Esophagus muscularis mucosa (tissue), 4 donors: ENCODE measurements at regions of chr9 and their contacts with region 1.

Region 1: GRCh38 chr9:19408693-19409400 is at the start of gene ACER2:
- DNase-seq: peak; percentile 97
- H3K4me3 ChIP-seq: peak within 1 kb of the TSS; percentile 70 to 91 (median 84)
- H3K27ac ChIP-seq: peak within 1 kb of the TSS; percentile 78 to 90 (median 84)
- H3K4me1 ChIP-seq: peaks cover 15 to 23% (median 17%) of the 10 kb centered on the region in 4 donors
- H3K27me3 ChIP-seq: no peaks in the 10 kb centered on the region
- CTCF ChIP-seq: peak in 1 of 3 experiments; percentile 6
- EP300 ChIP-seq: no peak
- POLR2A ChIP-seq: peak; percentile 56
- total RNA-seq, gene ACER2: 1.8 to 4.1 (median 2.6) TPM

Region 2: GRCh38 chr9:18768951-18769622 is 639.8 kb before region 1 on chr9:
- intact Hi-C with region 1: no loop called
- DNase-seq: no peak
- H3K4me3 ChIP-seq: no peak overlapping the region
- H3K27ac ChIP-seq: no peak overlapping the region
- H3K4me1 ChIP-seq: peaks cover 0 to 15% (median 10%) of the 10 kb centered on the region in 4 donors
- H3K27me3 ChIP-seq: no peaks in the 10 kb centered on the region
- CTCF ChIP-seq: no peak
- EP300 ChIP-seq: no peak
- POLR2A ChIP-seq: no peak

Region 3: DNA sequence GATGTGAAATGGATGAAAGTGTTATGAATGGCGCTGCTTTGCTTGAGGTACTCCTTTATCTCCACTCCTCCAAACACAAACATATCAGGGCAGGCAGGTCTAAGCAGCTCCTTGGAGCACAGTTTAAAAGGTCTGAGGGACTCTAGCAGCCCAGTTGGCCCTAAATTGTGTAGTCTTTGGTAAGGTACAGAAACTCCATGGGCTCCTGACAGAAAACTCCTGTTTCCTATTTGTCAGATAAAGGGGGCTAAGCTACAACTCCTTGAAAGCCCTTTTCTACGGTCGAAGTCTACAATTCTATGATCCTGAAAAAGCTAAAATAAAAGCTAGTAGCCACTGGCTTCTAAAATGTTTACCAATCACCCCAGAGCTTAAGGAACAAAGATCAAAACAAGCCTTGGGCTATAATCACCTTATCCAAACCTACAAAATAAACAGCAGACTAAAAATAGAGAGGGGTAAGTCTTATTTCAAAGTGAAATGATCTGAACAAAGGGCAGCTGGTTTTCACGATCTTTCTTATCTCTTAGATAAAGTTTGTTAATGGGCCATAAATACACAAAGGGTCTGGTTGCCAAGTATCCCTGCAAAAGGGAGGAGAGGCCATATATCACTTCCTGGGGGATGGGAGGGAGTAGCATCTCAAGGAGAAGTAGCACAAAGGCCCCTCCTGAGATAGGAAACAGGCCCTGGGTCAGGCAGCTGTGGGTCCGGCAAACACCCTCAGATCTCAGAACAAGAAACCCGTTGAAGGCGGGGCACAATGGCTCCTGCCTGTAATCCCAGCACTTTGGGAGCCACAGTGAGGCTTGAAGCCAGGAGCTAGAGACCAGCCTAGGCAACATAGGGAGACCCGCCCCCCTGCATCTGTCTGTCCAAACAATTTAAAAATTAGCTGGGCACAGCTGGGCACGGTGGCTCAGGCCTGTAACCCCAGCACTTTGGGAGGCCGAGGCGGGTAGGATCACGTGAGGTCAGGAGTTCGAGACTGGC is 206.7 kb before region 1 on chr9:
- intact Hi-C with region 1: no loop called
- DNase-seq: no peak
- H3K4me3 ChIP-seq: no peak overlapping the region
- H3K27ac ChIP-seq: no peak overlapping the region
- H3K4me1 ChIP-seq: no peaks in the 10 kb centered on the region
- H3K27me3 ChIP-seq: no peaks in the 10 kb centered on the region
- CTCF ChIP-seq: no peak
- EP300 ChIP-seq: no peak
- POLR2A ChIP-seq: no peak

Region 4: GRCh38 chr9:19379697-19380046 is 29.2 kb before region 1 on chr9:
- intact Hi-C with region 1: loop called (anchors 2 kb)
- DNase-seq: no peak
- H3K4me3 ChIP-seq: peak overlapping the region; percentile 59 to 85 (median 76)
- H3K27ac ChIP-seq: peak overlapping the region; percentile 92 to 95 (median 94)
- H3K4me1 ChIP-seq: peaks cover 22 to 32% (median 31%) of the 10 kb centered on the region in 4 donors
- H3K27me3 ChIP-seq: no peaks in the 10 kb centered on the region
- CTCF ChIP-seq: no peak
- EP300 ChIP-seq: no peak
- POLR2A ChIP-seq: no peak

Region 5: GRCh38 chr9:19511694-19512093 is 102.8 kb after region 1 on chr9:
- intact Hi-C with region 1: no loop called
- DNase-seq: no peak
- H3K4me3 ChIP-seq: no peak overlapping the region
- H3K27ac ChIP-seq: no peak overlapping the region
- H3K4me1 ChIP-seq: no peaks in the 10 kb centered on the region
- H3K27me3 ChIP-seq: no peaks in the 10 kb centered on the region
- CTCF ChIP-seq: no peak
- EP300 ChIP-seq: no peak
- POLR2A ChIP-seq: no peak